OCI-LY7 (cell line): ENCODE measurements at regions of chr3 and their contacts with region 1.

Region 1: DNA sequence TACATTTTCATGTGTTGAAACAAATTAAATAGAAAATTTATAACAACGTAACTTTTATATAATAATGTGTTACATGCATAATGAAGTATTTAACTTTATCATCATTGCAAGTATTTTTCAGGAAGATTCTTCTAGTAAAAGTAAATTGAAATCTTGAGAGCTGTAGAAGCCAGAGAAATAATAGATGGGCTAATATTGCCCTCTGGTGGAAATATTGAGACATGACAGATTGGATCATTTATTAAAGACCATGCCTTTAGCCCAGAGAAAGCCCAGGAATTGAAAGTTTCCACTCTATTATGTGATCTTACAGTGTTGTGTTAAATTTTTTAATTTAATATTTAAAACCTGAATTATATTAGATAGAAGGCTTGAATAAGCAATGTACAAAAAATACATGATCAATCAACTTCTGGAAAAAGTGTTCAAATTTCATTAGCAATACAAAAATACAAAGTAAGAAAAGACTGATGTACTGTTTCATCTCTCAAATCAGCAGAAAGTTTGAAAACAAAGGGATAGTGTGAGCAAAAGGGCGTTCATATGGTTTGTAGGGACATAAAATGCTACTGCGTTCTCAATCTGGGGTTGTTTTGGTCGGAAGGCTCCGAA is 52.7 kb upstream of the SPTSSB start:
- DNase-seq: peak; percentile 38
- H3K4me3 ChIP-seq: no peak overlapping the region
- H3K27ac ChIP-seq: no peak overlapping the region
- H3K4me1 ChIP-seq: no peaks in the 10 kb centered on the region
- CTCF ChIP-seq: peak; percentile 89

Region 2: GRCh38 chr3:160707187-160707794 is 716.7 kb before region 1 on chr3:
- CTCF ChIA-PET with region 1: no interaction called
- POLR2A ChIA-PET with region 1: no interaction called
- intact Hi-C with region 1: loop called (anchors 10 kb)
- DNase-seq: peak; percentile 58
- H3K4me3 ChIP-seq: no peak overlapping the region
- H3K27ac ChIP-seq: no peak overlapping the region
- H3K4me1 ChIP-seq: no peaks in the 10 kb centered on the region
- CTCF ChIP-seq: peak; percentile 77

Region 3: GRCh38 chr3:161305095-161305991 is 118.7 kb before region 1 on chr3:
- CTCF ChIA-PET with region 1: no interaction called
- POLR2A ChIA-PET with region 1: no interaction called
- intact Hi-C with region 1: loop called (anchors 10 kb)
- DNase-seq: peak; percentile 25
- H3K4me3 ChIP-seq: no peak overlapping the region
- H3K27ac ChIP-seq: no peak overlapping the region
- H3K4me1 ChIP-seq: no peaks in the 10 kb centered on the region
- CTCF ChIP-seq: peak; percentile 88

Region 4: GRCh38 chr3:161914737-161915417 is 490.9 kb after region 1 on chr3:
- CTCF ChIA-PET with region 1: no interaction called
- POLR2A ChIA-PET with region 1: no interaction called
- intact Hi-C with region 1: no loop called
- DNase-seq: no peak
- H3K4me3 ChIP-seq: no peak overlapping the region
- H3K27ac ChIP-seq: no peak overlapping the region
- H3K4me1 ChIP-seq: no peaks in the 10 kb centered on the region
- CTCF ChIP-seq: no peak